ENCODE measurements at regions of chr3 and their contacts with region 1.

Region 1: DNA sequence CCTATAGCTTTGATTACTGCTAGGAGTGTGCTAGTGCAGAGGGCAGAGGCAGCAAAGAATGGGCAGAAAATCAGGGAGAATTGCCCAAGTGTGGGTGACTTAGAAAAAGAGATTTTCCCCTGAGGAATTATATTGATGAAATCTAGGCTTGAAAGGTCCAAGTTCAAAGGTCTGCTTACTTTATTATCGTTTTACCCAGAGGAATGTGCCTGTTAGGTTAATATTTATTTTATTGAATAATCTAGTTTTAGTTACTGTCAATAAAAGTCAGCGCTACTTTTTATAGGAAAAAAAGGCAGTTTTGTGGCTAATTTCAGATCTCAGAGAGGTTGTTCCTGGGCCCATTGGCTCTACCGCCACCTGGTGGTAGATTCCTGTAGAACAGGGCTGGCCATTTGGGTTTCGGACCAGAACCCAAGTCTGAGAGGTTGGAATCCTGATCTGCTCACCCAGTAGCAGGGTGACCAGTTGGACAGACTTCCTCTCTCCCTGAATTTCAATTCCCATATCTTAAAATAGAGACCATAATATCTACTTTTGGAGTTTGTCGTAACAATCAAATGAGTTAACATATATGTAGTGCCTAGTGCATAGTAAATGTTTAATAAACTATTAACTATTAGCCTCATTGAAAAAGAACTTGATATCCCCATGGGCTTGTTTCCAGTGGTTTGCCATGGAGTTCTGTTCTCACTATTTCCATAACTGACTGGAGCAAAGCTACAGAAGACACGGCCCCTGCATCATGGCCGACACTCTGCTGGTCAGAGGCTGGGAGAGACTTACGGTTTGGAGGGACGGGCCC is 62.7 kb upstream of the ZNF148 start:
- ATAC-seq: peak in 3 of 8 experiments; percentile 25 to 35 (median 32)
- H3K4me3 ChIP-seq: no peak overlapping the region
- H3K27ac ChIP-seq: no peak overlapping the region
- H3K4me1 ChIP-seq: no peaks in the 10 kb centered on the region

Region 2: GRCh38 chr3:124730129-124730940 is 707.5 kb before region 1 on chr3 and contains the start of gene UMPS:
- in situ Hi-C with region 1: loop called in 1 of 9 experiments (anchors 25 kb)
- ATAC-seq: peak; percentile 94 to 100 (median 99)
- H3K4me3 ChIP-seq: peak within 1 kb of the TSS; percentile 61 to 96 (median 77)
- H3K27ac ChIP-seq: peak within 1 kb of the TSS; percentile 82 to 88
- H3K4me1 ChIP-seq: peaks cover 17 to 24% of the 10 kb centered on the region in 2 donors
- total RNA-seq, gene UMPS: 12.6 to 34.2 (median 24.2) TPM

Region 3: DNA sequence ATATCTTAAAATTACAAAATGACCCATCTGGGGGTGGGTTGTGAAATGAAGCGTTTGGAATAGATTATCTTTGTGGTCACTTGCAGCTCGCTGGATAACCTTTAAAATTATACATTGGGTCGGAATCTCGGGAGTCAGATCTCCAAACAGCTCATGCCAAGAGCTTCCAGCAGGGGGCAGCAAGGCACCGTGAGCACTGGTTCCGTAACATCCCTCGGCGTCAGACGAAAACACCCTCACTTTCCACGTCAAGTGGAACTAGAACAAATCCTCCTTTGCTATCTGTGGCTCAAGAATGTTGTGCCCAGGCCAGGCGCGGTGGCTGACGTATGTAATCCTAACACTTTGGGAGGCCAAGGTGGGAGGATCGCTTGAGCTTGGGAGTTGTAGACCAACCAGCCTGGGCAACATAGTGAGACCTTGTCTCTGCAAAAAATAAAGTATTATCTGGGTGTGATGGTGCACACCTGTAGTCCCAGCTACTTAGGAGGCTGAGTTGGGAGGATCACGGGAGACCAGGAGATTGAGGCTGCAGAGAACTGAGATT is 676.5 kb before region 1 on chr3:
- in situ Hi-C with region 1: loop called in 1 of 9 experiments (anchors 25 kb)
- ATAC-seq: peak; percentile 77 to 89 (median 82)
- H3K4me3 ChIP-seq: no peak overlapping the region
- H3K27ac ChIP-seq: no peak overlapping the region
- H3K4me1 ChIP-seq: peaks cover 0 to 2% of the 10 kb centered on the region in 2 donors

Region 4: DNA sequence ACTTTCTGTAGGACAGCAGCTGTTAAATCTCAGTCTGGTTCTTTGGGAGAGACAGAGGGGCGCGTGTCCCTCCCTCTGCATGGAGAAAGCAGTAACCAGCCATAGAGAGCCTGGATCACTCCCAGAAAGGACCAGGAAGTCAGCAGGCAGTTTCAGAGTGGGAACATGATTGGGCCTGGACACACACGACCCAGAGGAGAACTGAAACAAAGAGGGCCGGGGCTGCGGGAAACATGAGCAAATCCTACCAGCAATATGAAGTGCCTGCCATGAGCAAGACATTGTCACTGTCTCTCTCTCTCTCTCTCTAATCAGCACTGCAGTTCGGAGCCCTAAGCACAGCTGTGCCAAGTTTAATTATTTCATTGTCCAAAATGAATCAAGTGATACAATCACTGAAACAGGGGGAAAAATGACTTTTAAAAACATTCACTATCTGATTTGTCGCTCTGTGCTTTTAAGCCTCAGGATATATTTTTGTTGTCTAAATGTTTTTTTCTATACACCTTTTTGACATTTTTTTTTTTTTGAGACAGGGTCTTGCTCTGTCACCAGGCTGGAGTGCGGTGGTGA is 520.9 kb before region 1 on chr3:
- in situ Hi-C with region 1: no loop called
- ATAC-seq: peak in 1 of 8 experiments; percentile 52
- H3K4me3 ChIP-seq: no peak overlapping the region
- H3K27ac ChIP-seq: no peak overlapping the region
- H3K4me1 ChIP-seq: no peaks in the 10 kb centered on the region

Region 5: GRCh38 chr3:124928333-124929202 is 509.3 kb before region 1 on chr3:
- in situ Hi-C with region 1: loop called in 2 of 9 experiments (anchors 25 kb)
- ATAC-seq: peak in 4 of 8 experiments; percentile 46 to 88 (median 83)
- H3K4me3 ChIP-seq: no peak overlapping the region
- H3K27ac ChIP-seq: no peak overlapping the region
- H3K4me1 ChIP-seq: no peaks in the 10 kb centered on the region

Region 6: GRCh38 chr3:124995460-124995994 is 442.3 kb before region 1 on chr3:
- in situ Hi-C with region 1: loop called in 3 of 9 experiments (anchors 10 to 25 kb)
- ATAC-seq: peak in 7 of 8 experiments; percentile 1 to 96 (median 91)
- H3K4me3 ChIP-seq: no peak overlapping the region
- H3K27ac ChIP-seq: no peak overlapping the region
- H3K4me1 ChIP-seq: peaks cover 2 to 14% of the 10 kb centered on the region in 2 donors

Region 7: GRCh38 chr3:125003369-125003853 is 434.4 kb before region 1 on chr3:
- in situ Hi-C with region 1: loop called in 3 of 9 experiments (anchors 10 to 25 kb)
- ATAC-seq: peak; percentile 59 to 85 (median 71)
- H3K4me3 ChIP-seq: no peak overlapping the region
- H3K27ac ChIP-seq: no peak overlapping the region
- H3K4me1 ChIP-seq: peaks cover 27 to 30% of the 10 kb centered on the region in 2 donors

Region 8: GRCh38 chr3:125032100-125032643 is 405.7 kb before region 1 on chr3:
- in situ Hi-C with region 1: loop called in 1 of 9 experiments (anchors 25 kb)
- ATAC-seq: peak in 3 of 8 experiments; percentile 12 to 36 (median 28)
- H3K4me3 ChIP-seq: no peak overlapping the region
- H3K27ac ChIP-seq: no peak overlapping the region
- H3K4me1 ChIP-seq: no peaks in the 10 kb centered on the region

Region 9: GRCh38 chr3:125165189-125165947 is 272.5 kb before region 1 on chr3:
- in situ Hi-C with region 1: no loop called
- ATAC-seq: peak in 6 of 8 experiments; percentile 15 to 81 (median 56)
- H3K4me3 ChIP-seq: no peak overlapping the region
- H3K27ac ChIP-seq: no peak overlapping the region
- H3K4me1 ChIP-seq: peaks cover 20 to 23% of the 10 kb centered on the region in 2 donors

Region 10: GRCh38 chr3:125585595-125586223 is 147.9 kb after region 1 on chr3:
- in situ Hi-C with region 1: no loop called
- ATAC-seq: peak; percentile 38 to 81 (median 61)
- H3K4me3 ChIP-seq: no peak overlapping the region
- H3K27ac ChIP-seq: no peak overlapping the region
- H3K4me1 ChIP-seq: peaks cover 0 to 3% of the 10 kb centered on the region in 2 donors